SK-N-SH (cell line): ENCODE measurements at regions of chr21 and their contacts with region 1.

Region 1: DNA sequence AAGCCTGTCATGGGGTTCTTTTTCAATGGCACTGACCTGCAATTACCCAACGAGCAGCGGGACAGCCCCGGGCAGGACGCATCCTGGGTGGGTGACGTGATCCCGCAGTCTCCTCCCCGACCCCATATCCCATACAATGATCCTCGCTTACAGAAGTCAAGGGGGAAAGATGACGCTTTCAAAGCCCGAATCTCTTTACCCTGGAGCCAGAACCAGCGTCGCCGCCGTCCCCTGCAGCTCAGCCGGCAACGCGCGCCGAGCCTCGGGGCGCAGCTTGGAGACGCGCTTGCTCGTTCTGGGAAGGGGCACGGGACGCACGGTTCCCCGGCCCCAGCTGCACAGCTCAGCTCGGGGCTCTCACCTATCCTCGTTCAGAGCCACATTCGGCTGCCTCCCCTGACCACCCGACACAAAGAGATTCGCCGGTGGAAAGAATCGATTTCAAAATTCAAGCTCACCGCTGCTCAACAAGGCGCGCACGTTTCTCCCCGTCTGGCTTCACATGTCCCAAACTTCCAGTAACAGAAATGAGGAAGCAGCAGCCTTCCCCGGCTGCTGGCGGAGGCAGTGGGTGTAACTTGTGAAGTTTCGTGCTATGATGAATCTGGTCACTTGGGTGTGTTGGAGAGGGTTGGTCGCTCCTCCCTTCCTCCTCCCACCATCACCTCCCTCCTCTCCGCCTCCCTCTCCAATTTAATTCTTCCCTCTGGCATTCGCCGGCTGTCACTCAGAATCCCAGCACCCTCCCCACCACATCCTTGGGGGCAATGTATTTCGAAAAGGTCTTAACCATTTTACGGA is at the start of gene TIAM1:
- DNase-seq: peak; percentile 64
- H3K4me3 ChIP-seq: peak within 1 kb of the TSS; percentile 55 to 56
- H3K27ac ChIP-seq: no peak within 1 kb of the TSS
- H3K4me1 ChIP-seq: peaks cover 0 to 13% of the 10 kb centered on the region in 2 experiments; a peak in 1 of 4 replicates
- H3K27me3 ChIP-seq: peaks cover 21% of the 10 kb centered on the region; the same call in 1 of the 2 replicates
- CTCF ChIP-seq: no peak
- EP300 ChIP-seq: no peak
- RAD21 ChIP-seq: no peak
- polyA plus RNA-seq, gene TIAM1: 1.7 and 2.4 TPM in 2 replicates

Region 2: GRCh38 chr21:31326522-31327242 is 17.2 kb before region 1 on chr21:
- CTCF ChIA-PET with region 1: no interaction called
- POLR2A ChIA-PET with region 1: no interaction called
- DNase-seq: no peak
- H3K4me3 ChIP-seq: no peak overlapping the region
- H3K27ac ChIP-seq: no peak overlapping the region
- H3K4me1 ChIP-seq: no peaks in the 10 kb centered on the region
- H3K27me3 ChIP-seq: no peaks in the 10 kb centered on the region
- CTCF ChIP-seq: no peak
- EP300 ChIP-seq: no peak
- RAD21 ChIP-seq: no peak

Region 3: DNA sequence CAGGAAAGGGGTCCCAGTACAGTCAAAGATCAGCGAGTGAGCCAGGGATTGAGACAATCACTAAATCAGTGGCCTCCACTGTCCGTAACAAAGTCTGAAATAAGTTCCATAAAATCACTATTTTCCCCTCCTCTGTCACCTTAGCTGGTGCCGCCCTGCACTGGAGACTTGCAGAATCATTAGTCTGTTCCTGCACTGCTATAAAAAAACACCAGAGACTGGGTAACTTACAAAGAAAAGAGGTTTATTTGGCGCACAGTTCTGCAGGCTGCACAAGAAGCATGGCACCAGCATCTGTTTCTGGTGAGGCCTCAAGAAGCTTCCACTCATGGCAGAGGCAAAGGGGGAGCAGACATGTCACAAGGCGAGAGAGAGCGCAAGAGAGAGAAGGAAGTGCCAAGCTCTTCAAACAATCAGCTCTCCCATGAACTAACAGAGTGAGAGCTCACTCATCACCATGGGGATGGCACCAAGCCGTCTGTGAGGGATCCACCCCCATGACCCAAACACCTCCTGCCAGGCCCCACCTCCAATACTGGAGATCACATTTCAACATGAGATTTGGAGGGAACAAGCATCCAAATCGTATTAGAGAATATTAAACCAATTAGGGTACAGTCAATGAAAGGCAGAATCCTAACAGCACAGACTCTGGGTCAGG is 129.9 kb after region 1 on chr21:
- CTCF ChIA-PET with region 1: no interaction called
- POLR2A ChIA-PET with region 1: no interaction called
- DNase-seq: no peak
- H3K4me3 ChIP-seq: no peak overlapping the region
- H3K27ac ChIP-seq: no peak overlapping the region
- H3K4me1 ChIP-seq: no peaks in the 10 kb centered on the region
- H3K27me3 ChIP-seq: no peaks in the 10 kb centered on the region
- CTCF ChIP-seq: no peak
- EP300 ChIP-seq: no peak
- RAD21 ChIP-seq: no peak

Region 4: GRCh38 chr21:31558962-31559367 is 215.1 kb after region 1 on chr21:
- CTCF ChIA-PET with region 1: interaction called, 12 read pairs
- POLR2A ChIA-PET with region 1: no interaction called
- DNase-seq: peak; percentile 97
- H3K4me3 ChIP-seq: peak overlapping the region; percentile 83 to 89
- H3K27ac ChIP-seq: peak overlapping the region in 1 of 2 experiments; percentile 75; a peak in 2 of 4 replicates
- H3K4me1 ChIP-seq: peaks cover 0 to 13% of the 10 kb centered on the region in 2 experiments; a peak in 1 of 4 replicates
- H3K27me3 ChIP-seq: peaks cover 15% of the 10 kb centered on the region
- CTCF ChIP-seq: peak; percentile 25; the same call in 1 of the 2 replicates
- EP300 ChIP-seq: no peak
- RAD21 ChIP-seq: no peak

Region 5: DNA sequence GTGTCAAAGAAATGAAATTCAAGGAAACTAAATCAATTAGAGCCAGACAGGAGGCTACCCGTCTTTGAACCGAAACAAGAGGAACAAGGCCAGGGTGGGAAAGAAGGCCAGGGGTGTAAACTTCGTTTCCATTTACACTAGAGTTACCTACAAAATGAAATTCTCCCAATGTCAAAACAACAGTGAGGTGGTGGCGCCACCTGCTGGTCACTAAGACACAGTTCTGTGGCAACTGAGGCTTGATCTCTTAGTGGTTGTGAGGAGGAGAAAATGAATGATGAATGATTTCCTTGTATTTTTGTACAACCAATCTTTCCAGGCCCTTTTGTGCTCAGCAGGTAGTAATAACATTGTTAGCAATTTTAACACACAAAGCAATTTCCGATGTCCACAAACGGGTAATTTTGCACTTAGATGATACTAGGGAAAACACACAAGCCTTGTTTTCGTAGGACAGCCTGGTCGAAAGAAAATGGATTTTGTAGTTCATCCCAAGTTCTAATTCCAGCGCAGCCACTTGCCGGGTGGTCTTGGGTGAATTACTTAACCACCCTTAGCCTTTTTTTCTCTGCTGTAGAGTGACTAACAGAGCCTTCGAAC is 260.8 kb after region 1 on chr21:
- CTCF ChIA-PET with region 1: interaction called, 14 read pairs
- POLR2A ChIA-PET with region 1: no interaction called
- DNase-seq: peak; percentile 70
- H3K4me3 ChIP-seq: peak overlapping the region in 1 of 2 experiments; percentile 30; a peak in 1 of 4 replicates
- H3K27ac ChIP-seq: no peak overlapping the region
- H3K4me1 ChIP-seq: no peaks in the 10 kb centered on the region
- H3K27me3 ChIP-seq: no peaks in the 10 kb centered on the region; the same call in 1 of the 2 replicates
- CTCF ChIP-seq: peak; percentile 91
- EP300 ChIP-seq: no peak
- RAD21 ChIP-seq: peak; percentile 94